ENCODE measurements at regions of chr3 and their contacts with region 1.

Region 1: DNA sequence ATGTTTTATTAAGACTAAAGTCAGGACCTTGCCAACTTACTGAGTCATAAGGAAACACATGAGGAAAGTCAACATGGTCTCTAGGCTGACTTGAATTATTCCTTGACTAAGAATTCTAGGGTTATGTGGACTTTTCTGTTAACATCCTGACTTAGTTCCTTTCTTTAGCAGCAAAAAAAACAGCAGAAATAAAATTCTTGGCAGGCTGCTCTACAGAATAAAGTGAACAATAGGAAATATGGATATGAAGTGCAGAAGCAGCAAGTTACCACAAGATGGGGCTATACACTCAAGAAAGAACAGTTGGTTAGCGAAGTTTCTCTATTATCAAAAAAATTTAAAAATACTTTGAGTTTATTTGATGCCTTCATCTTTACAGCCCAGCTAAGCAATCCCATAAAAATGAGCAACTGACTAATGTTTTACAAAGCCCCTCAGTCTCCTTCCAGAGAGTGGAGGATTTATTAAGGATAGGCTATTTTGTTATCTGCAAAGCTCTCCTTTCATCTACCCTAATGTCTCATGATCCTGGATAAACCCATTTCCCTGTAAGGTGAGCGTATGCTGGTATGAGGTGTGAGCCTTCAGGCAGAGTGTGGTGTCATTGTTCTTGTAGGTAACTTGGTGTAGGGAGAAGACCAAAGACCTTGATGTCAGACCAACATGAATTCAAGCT is 23.1 kb upstream of the MCCC1 start:
- DNase-seq: peak in 7 of 9 donors; percentile 15 to 60 (median 49)
- ATAC-seq: peak; percentile 75
- H3K4me3 ChIP-seq: no peak overlapping the region
- H3K4me3 Mint-ChIP-seq: no peak overlapping the region
- H3K27ac ChIP-seq: no peak overlapping the region
- H3K27ac Mint-ChIP-seq: no peak overlapping the region
- H3K4me1 ChIP-seq: no peaks in the 10 kb centered on the region
- H3K4me1 Mint-ChIP-seq: peaks cover 0 to 6% (median 0%) of the 10 kb centered on the region in 7 donors
- H3K27me3 ChIP-seq: no peaks in the 10 kb centered on the region
- H3K27me3 Mint-ChIP-seq: peaks cover 2 to 5% (median 4%) of the 10 kb centered on the region in 5 donors

Region 2: DNA sequence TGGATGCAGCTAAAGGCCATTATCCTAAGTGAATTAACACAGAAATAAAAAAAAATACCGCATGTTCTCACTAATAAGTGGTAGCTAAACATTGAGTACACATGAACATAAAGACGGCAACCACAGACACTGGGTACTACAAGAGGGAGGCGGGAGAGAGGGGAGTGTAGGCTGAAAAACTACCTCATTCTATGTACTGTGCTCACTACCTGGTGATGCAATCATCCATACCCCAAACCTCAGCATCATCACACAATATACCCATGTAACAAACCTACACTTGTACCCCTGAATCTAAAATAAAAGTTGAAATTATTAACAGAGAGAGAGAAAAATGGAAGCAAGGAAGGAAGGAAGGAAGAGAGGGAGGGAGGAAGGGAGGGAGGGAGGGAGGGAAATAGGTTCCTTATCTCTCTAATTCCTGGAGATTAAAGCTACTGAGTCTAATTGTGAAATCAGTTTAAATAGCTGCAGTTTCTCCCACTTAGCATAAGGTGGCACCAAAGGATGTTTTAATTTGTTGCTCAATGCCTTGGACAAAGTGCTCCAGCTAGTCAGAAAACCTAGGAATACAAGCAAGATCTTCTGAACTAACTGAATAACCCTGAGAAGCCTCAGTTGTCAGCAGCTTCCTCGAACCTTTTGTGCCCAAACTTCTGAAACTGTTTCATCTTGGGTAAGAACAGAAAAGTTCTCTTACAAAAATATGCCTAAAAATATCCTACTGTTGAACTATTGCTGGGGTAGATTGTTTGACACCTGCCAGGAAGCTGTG is 408.5 kb before region 1 on chr3:
- CTCF ChIA-PET with region 1: no interaction called
- POLR2A ChIA-PET with region 1: no interaction called
- intact Hi-C with region 1: loop called (anchors 1 kb)
- DNase-seq: peak in 6 of 9 donors; percentile 11 to 51 (median 33)
- ATAC-seq: peak; percentile 66
- H3K4me3 ChIP-seq: no peak overlapping the region
- H3K4me3 Mint-ChIP-seq: no peak overlapping the region
- H3K27ac ChIP-seq: no peak overlapping the region
- H3K27ac Mint-ChIP-seq: no peak overlapping the region
- H3K4me1 ChIP-seq: no peaks in the 10 kb centered on the region
- H3K4me1 Mint-ChIP-seq: peaks cover 4 to 16% (median 7%) of the 10 kb centered on the region in 7 donors
- H3K27me3 ChIP-seq: no peaks in the 10 kb centered on the region
- H3K27me3 Mint-ChIP-seq: peaks cover 0 to 2% (median 0%) of the 10 kb centered on the region in 5 donors

Region 3: GRCh38 chr3:183161552-183162336 is 39.3 kb after region 1 on chr3:
- CTCF ChIA-PET with region 1: no interaction called
- POLR2A ChIA-PET with region 1: no interaction called
- intact Hi-C with region 1: loop called (anchors 2 to 5 kb)
- DNase-seq: peak in 4 of 9 donors; percentile 12 to 18 (median 14)
- ATAC-seq: no peak
- H3K4me3 ChIP-seq: peak overlapping the region; percentile 92
- H3K4me3 Mint-ChIP-seq: peak overlapping the region; percentile 80 to 97 (median 90)
- H3K27ac ChIP-seq: peak overlapping the region; percentile 61
- H3K27ac Mint-ChIP-seq: peak overlapping the region; percentile 46 to 90 (median 76)
- H3K4me1 ChIP-seq: peaks cover 5% of the 10 kb centered on the region in 2 donors
- H3K4me1 Mint-ChIP-seq: peaks cover 8 to 33% (median 9%) of the 10 kb centered on the region in 7 donors
- H3K27me3 ChIP-seq: no peaks in the 10 kb centered on the region
- H3K27me3 Mint-ChIP-seq: peaks cover 0 to 3% (median 0%) of the 10 kb centered on the region in 5 donors

Region 4: GRCh38 chr3:183178629-183179549 is 56.5 kb after region 1 on chr3:
- CTCF ChIA-PET with region 1: interaction called, 6 read pairs
- POLR2A ChIA-PET with region 1: no interaction called
- intact Hi-C with region 1: loop called (anchors 1 kb)
- DNase-seq: peak in 7 of 9 donors; percentile 22 to 61 (median 31)
- ATAC-seq: peak; percentile 67
- H3K4me3 ChIP-seq: peak overlapping the region; percentile 46
- H3K4me3 Mint-ChIP-seq: peak overlapping the region; percentile 63 to 85 (median 78)
- H3K27ac ChIP-seq: no peak overlapping the region
- H3K27ac Mint-ChIP-seq: no peak overlapping the region
- H3K4me1 ChIP-seq: no peaks in the 10 kb centered on the region
- H3K4me1 Mint-ChIP-seq: peaks cover 5 to 15% (median 8%) of the 10 kb centered on the region in 7 donors
- H3K27me3 ChIP-seq: peaks cover 0 to 3% of the 10 kb centered on the region in 2 donors
- H3K27me3 Mint-ChIP-seq: peaks cover 28 to 55% (median 46%) of the 10 kb centered on the region in 5 donors

Region 5: DNA sequence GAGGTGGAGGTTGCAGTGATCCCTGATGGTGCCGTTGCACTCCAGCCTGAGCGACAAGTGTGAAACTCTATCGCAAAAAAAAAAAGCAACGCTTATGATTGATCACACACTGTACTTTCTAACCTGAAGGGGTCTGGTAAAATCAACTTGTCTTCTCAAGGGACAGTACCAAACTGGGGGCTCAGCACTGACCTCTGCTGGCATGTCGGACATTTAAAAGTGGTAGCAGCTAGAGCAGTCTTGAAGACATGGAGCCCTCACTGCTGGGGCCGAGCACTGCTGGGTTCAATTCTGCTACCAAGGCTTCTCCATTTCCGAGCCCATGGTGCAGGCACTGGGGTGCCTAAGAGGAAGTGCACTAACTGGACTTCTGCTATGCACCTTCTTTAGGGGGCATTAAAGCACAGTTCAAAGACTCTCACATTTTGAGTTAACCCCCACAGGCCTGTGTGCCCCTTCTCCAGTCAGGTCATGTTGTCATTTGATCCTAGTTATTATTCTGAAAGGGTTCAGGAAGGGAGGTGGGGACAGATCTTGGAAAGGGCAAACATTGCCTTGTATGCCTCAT is 66.6 kb after region 1 on chr3:
- CTCF ChIA-PET with region 1: interaction called, 7 read pairs
- POLR2A ChIA-PET with region 1: no interaction called
- intact Hi-C with region 1: loop called (anchors 1 kb)
- DNase-seq: peak in 1 of 9 donors; percentile 17
- ATAC-seq: peak; percentile 50
- H3K4me3 ChIP-seq: no peak overlapping the region
- H3K4me3 Mint-ChIP-seq: no peak overlapping the region
- H3K27ac ChIP-seq: no peak overlapping the region
- H3K27ac Mint-ChIP-seq: no peak overlapping the region
- H3K4me1 ChIP-seq: no peaks in the 10 kb centered on the region
- H3K4me1 Mint-ChIP-seq: peaks cover 0 to 16% (median 0%) of the 10 kb centered on the region in 7 donors
- H3K27me3 ChIP-seq: no peaks in the 10 kb centered on the region
- H3K27me3 Mint-ChIP-seq: no peaks in the 10 kb centered on the region

Region 6: GRCh38 chr3:183766745-183767606 is 644.6 kb after region 1 on chr3:
- CTCF ChIA-PET with region 1: interaction called, 8 read pairs
- POLR2A ChIA-PET with region 1: no interaction called
- intact Hi-C with region 1: loop called (anchors 1 to 10 kb)
- DNase-seq: peak; percentile 41 to 72 (median 65)
- ATAC-seq: peak; percentile 96
- H3K4me3 ChIP-seq: no peak overlapping the region
- H3K4me3 Mint-ChIP-seq: no peak overlapping the region
- H3K27ac ChIP-seq: no peak overlapping the region
- H3K27ac Mint-ChIP-seq: peak overlapping the region in 4 of 9 donors; percentile 3 to 73 (median 40)
- H3K4me1 ChIP-seq: no peaks in the 10 kb centered on the region
- H3K4me1 Mint-ChIP-seq: peaks cover 5 to 18% (median 12%) of the 10 kb centered on the region in 7 donors
- H3K27me3 ChIP-seq: no peaks in the 10 kb centered on the region
- H3K27me3 Mint-ChIP-seq: no peaks in the 10 kb centered on the region